CD14-positive monocyte (primary cell): ENCODE measurements at regions of chr19 and their contacts with region 1.

Region 1: GRCh38 chr19:16041299-16041990 is 34.9 kb upstream of the TPM4 start:
- DNase-seq: peak; percentile 62 to 74 (median 66)
- H3K4me3 ChIP-seq: peak overlapping the region in 1 of 3 experiments; percentile 17
- H3K4me3 Mint-ChIP-seq: peak overlapping the region; percentile 20 to 63
- H3K27ac ChIP-seq: no peak overlapping the region
- H3K27ac Mint-ChIP-seq: peak overlapping the region in 2 of 7 donors; percentile 30 to 56
- H3K4me1 ChIP-seq: peaks cover 8 to 17% of the 10 kb centered on the region in 2 donors
- H3K4me1 Mint-ChIP-seq: peaks cover 8% of the 10 kb centered on the region
- H3K27me3 ChIP-seq: no peaks in the 10 kb centered on the region
- H3K27me3 Mint-ChIP-seq: peaks cover 4 to 6% (median 5%) of the 10 kb centered on the region in 3 donors
- CTCF ChIP-seq: peak; percentile 97

Region 2: GRCh38 chr19:16088351-16089009 is 47.0 kb after region 1 on chr19:
- intact Hi-C with region 1: no loop called
- DNase-seq: no peak
- H3K4me3 ChIP-seq: no peak overlapping the region
- H3K4me3 Mint-ChIP-seq: no peak overlapping the region
- H3K27ac ChIP-seq: no peak overlapping the region
- H3K27ac Mint-ChIP-seq: peak overlapping the region in 3 of 7 donors; percentile 26 to 58 (median 32)
- H3K4me1 ChIP-seq: peaks cover 15 to 34% of the 10 kb centered on the region in 2 donors
- H3K4me1 Mint-ChIP-seq: peaks cover 24% of the 10 kb centered on the region
- H3K27me3 ChIP-seq: no peaks in the 10 kb centered on the region
- H3K27me3 Mint-ChIP-seq: peaks cover 0 to 2% (median 0%) of the 10 kb centered on the region in 3 donors
- CTCF ChIP-seq: no peak

Region 3: DNA sequence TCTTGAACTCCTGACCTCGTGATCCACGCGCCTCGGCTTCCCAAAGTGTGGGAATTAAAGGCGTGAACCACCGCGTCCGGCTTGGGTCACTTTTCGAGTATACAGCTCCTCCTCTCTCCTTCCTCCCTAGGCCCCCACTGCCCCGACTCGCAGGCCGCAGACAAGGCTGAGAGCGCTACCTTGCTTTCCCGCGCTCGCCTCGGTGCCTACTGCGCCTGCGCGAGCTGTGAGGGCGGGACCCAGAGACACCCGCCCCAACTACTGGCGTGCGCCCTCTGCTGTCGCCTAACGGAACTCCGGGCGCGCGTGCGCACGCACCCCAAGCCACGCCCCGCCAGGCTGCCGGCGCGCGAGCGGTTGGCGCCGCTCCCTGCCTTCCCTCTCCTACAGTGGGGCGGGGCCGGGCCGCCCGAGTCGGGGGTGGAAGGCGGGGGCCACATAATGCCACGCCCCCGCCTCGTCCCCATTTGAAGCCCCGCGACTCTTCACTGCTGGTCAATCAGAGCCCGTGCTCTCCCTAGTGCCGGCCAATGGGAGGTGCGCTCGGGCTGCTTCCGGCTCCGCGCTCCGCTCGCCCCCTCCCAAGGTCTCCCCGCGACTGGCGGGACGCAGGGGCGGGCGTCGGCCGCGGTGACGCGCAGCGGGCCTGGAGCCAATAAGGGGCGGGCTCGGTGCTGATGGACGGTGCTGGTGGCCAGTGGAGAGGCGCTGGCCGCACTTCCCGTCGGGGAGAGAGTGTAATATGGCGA is 69.9 kb after region 1 on chr19 and contains the start of gene RAB8A:
- intact Hi-C with region 1: loop called in 1 of 2 experiments (anchors 5 kb)
- DNase-seq: peak; percentile 99 to 100 (median 99)
- H3K4me3 ChIP-seq: peak within 1 kb of the TSS; percentile 75 to 96 (median 94)
- H3K4me3 Mint-ChIP-seq: peak within 1 kb of the TSS; percentile 94 to 98
- H3K27ac ChIP-seq: peak within 1 kb of the TSS; percentile 74 to 96
- H3K27ac Mint-ChIP-seq: peak within 1 kb of the TSS; percentile 94 to 99 (median 98)
- H3K4me1 ChIP-seq: peaks cover 48 to 53% of the 10 kb centered on the region in 2 donors
- H3K4me1 Mint-ChIP-seq: peaks cover 37% of the 10 kb centered on the region
- H3K27me3 ChIP-seq: no peaks in the 10 kb centered on the region
- H3K27me3 Mint-ChIP-seq: peaks cover 0 to 2% (median 0%) of the 10 kb centered on the region in 3 donors
- CTCF ChIP-seq: peak; percentile 96
- polyA plus RNA-seq, gene RAB8A: 109 to 124 (median 114) TPM

Region 4: GRCh38 chr19:16382775-16383543 is 341.5 kb after region 1 on chr19:
- intact Hi-C with region 1: loop called in 1 of 2 experiments (anchors 10 kb)
- DNase-seq: peak; percentile 71 to 76 (median 75)
- H3K4me3 ChIP-seq: peak overlapping the region in 1 of 3 experiments; percentile 67
- H3K4me3 Mint-ChIP-seq: peak overlapping the region; percentile 66 to 80
- H3K27ac ChIP-seq: peak overlapping the region; percentile 44 to 78
- H3K27ac Mint-ChIP-seq: peak overlapping the region; percentile 79 to 95 (median 89)
- H3K4me1 ChIP-seq: peaks cover 16 to 21% of the 10 kb centered on the region in 2 donors
- H3K4me1 Mint-ChIP-seq: peaks cover 22% of the 10 kb centered on the region
- H3K27me3 ChIP-seq: no peaks in the 10 kb centered on the region
- H3K27me3 Mint-ChIP-seq: peaks cover 0 to 2% (median 2%) of the 10 kb centered on the region in 3 donors
- CTCF ChIP-seq: peak; percentile 89

Region 5: DNA sequence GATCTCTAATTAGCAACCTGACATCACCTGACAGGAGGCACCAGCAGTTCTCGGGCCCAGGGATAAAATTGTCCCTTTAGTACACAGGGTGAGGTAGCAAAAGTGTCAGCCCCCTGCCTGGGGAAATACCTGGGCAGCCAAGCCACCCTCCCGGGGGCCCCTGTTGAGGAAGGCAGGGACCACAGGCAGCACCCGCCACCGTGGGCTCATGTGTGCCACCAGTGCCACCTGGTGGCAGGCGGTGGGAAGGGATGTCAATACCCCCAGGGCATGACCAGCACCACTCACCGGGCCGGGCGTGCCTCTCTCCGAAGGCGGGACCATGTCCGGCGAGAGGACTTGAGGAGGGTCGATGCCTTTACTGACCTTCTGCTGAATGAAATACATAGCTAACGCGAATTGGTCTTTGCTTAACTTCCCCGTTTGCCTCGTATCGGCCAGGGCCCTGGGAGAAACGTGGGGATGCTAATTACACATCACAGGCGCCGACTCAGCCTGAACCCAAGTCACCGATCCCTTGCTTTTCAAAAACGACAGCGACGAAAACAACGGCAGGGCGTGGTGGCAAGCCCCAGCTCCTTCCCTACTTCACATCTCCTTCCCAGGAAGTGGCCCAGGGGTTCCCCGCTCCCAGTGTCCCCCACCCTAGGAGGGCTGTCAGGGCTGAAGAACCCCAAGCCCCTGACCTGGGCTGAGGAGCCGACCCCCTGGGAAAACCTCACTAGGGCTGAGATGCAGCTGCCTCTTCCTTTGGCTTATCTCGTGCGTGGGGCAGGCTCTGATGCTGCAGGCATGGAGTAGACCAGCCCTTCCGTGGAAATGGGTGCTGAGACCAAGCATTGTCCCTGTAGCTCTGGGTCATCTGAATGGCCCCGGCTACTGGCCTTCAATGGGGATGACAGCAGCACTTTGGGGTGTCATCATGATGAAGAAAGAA is 376.5 kb after region 1 on chr19:
- intact Hi-C with region 1: loop called in 1 of 2 experiments (anchors 5 kb)
- DNase-seq: peak; percentile 49 to 61 (median 57)
- H3K4me3 ChIP-seq: no peak overlapping the region
- H3K4me3 Mint-ChIP-seq: no peak overlapping the region
- H3K27ac ChIP-seq: peak overlapping the region in 1 of 2 donors; percentile 20
- H3K27ac Mint-ChIP-seq: peak overlapping the region in 6 of 7 donors; percentile 18 to 80 (median 35)
- H3K4me1 ChIP-seq: peaks cover 0 to 4% of the 10 kb centered on the region in 2 donors
- H3K4me1 Mint-ChIP-seq: peaks cover 10% of the 10 kb centered on the region
- H3K27me3 ChIP-seq: no peaks in the 10 kb centered on the region
- H3K27me3 Mint-ChIP-seq: peaks cover 0 to 2% (median 0%) of the 10 kb centered on the region in 3 donors
- CTCF ChIP-seq: peak; percentile 94